ENCODE measurements at regions of chr3 and their contacts with region 1.

Region 1: GRCh38 chr3:43998836-43999727 is 242.6 kb upstream of the TOPAZ1 start:
- DNase-seq: peak; percentile 48
- ATAC-seq: peak; percentile 45
- H3K4me3 Mint-ChIP-seq: peak overlapping the region; percentile 89
- H3K27ac Mint-ChIP-seq: peak overlapping the region; percentile 66
- H3K4me1 Mint-ChIP-seq: peaks cover 46% of the 10 kb centered on the region
- H3K27me3 Mint-ChIP-seq: peaks cover 51% of the 10 kb centered on the region
- CTCF ChIP-seq: no peak

Region 2: DNA sequence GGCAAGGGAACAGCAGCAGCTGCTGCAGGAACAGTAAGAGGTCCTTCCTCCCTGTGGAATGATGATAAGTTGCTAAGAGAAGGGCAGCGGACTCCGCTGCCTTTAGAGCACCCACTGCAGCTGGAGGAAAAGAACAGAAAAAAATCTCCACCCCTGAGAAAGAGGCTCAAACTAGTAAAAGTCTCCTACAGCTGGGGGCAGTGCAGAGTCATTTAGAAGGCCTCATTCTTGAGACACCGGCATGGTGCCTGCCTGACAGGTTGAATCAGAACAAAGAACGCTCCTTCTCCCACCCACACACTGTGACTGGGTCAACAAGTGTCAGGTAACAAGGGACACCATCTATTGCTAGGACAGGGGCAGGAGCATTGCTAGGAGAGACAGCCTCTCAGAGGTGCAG is 119.9 kb before region 1 on chr3:
- CTCF ChIA-PET with region 1: no interaction called
- POLR2A ChIA-PET with region 1: no interaction called
- intact Hi-C with region 1: loop called (anchors 2 kb)
- DNase-seq: no peak
- ATAC-seq: no peak
- H3K4me3 Mint-ChIP-seq: no peak overlapping the region
- H3K27ac Mint-ChIP-seq: no peak overlapping the region
- H3K4me1 Mint-ChIP-seq: no peaks in the 10 kb centered on the region
- H3K27me3 Mint-ChIP-seq: peaks cover 2% of the 10 kb centered on the region
- CTCF ChIP-seq: no peak

Region 3: GRCh38 chr3:44021651-44022594 is 22.8 kb after region 1 on chr3:
- CTCF ChIA-PET with region 1: interaction called, 3 read pairs
- POLR2A ChIA-PET with region 1: no interaction called
- intact Hi-C with region 1: loop called (anchors 2 kb)
- DNase-seq: no peak
- ATAC-seq: no peak
- H3K4me3 Mint-ChIP-seq: peak overlapping the region; percentile 74
- H3K27ac Mint-ChIP-seq: no peak overlapping the region
- H3K4me1 Mint-ChIP-seq: peaks cover 7% of the 10 kb centered on the region
- H3K27me3 Mint-ChIP-seq: peaks cover 33% of the 10 kb centered on the region
- CTCF ChIP-seq: no peak

Region 4: DNA sequence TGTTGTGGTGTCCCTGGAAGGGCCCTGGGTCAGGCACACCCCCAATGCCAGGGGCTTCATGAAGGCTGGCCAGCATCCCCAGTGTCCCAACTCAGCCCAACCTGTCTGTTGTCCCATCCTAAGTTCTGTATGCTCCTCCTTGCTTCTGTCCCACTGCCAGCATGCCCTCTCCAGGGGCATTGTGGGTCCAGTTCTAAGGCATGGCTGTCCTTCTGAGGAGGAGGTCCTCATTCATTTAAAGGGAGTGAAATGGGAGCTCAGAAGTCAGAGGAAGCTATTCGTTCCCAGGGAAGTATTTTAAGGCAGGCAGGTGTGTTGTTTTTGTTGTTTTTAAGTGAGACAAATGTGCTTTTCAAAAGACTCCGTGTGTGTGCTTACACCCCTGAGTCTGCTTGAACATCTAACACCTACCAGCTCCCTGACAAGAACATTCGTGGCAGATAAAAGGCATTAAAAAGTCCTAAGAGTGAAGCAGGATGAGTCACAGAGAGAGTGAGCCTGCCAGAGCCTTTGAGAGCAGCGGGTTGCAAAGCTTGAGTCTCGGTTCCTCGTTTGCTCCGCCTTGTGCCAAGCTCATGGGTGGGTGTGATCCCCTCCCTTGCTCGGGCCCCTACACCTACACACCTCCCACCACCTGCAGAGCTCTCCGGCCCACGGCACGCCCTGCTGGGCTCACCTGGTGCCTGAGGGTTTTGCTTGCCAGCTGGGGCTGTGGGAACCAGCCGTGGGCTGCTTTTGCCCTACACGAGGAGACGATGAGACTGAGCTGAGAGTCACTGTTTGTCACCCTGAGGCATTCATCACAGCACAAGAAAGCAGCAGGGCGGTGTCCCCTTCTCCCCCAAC is 59.2 kb after region 1 on chr3:
- CTCF ChIA-PET with region 1: interaction called, 6 read pairs
- POLR2A ChIA-PET with region 1: interaction called, 6 read pairs
- intact Hi-C with region 1: loop called (anchors 1 kb)
- DNase-seq: peak; percentile 69
- ATAC-seq: peak; percentile 97
- H3K4me3 Mint-ChIP-seq: peak overlapping the region; percentile 75
- H3K27ac Mint-ChIP-seq: peak overlapping the region; percentile 92
- H3K4me1 Mint-ChIP-seq: peaks cover 38% of the 10 kb centered on the region
- H3K27me3 Mint-ChIP-seq: no peaks in the 10 kb centered on the region
- CTCF ChIP-seq: no peak

Region 5: DNA sequence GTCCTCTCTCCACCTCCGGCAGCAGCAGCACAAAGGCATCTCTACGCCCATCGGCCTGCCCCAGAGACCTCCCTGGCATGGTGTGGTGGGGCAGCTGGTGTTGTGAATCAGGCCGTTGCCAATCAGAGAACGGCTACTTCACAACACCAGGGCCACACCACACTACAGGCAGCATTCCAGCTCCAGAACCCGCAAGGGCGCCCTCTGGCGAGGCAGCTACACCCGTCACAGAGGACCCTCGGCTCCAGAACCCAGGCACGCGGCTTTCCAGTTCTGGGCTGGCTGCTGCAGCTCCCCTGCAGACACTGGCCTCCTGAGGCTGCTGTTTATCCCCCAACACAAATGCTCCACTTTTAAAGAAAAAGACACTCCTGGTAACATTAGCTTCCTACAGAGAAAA is 115.1 kb after region 1 on chr3:
- CTCF ChIA-PET with region 1: interaction called, 20 read pairs
- POLR2A ChIA-PET with region 1: no interaction called
- intact Hi-C with region 1: loop called (anchors 1 kb)
- DNase-seq: peak; percentile 43
- ATAC-seq: peak; percentile 72
- H3K4me3 Mint-ChIP-seq: no peak overlapping the region
- H3K27ac Mint-ChIP-seq: no peak overlapping the region
- H3K4me1 Mint-ChIP-seq: no peaks in the 10 kb centered on the region
- H3K27me3 Mint-ChIP-seq: peaks cover 7% of the 10 kb centered on the region
- CTCF ChIP-seq: no peak

Region 6: GRCh38 chr3:44235604-44236484 is 236.8 kb after region 1 on chr3:
- CTCF ChIA-PET with region 1: no interaction called
- POLR2A ChIA-PET with region 1: no interaction called
- intact Hi-C with region 1: loop called (anchors 1 kb)
- DNase-seq: no peak
- ATAC-seq: peak; percentile 66
- H3K4me3 Mint-ChIP-seq: no peak overlapping the region
- H3K27ac Mint-ChIP-seq: no peak overlapping the region
- H3K4me1 Mint-ChIP-seq: peaks cover 4% of the 10 kb centered on the region
- H3K27me3 Mint-ChIP-seq: peaks cover 10% of the 10 kb centered on the region
- CTCF ChIP-seq: peak; percentile 64

Measured in activated B cell treated with CpG ODN at 0.5 μM for 24 hours (primary cell).